Right ventricle myocardium inferior (tissue), 1 donor: ENCODE measurements at regions of chr12 and their contacts with region 1.

Region 1: DNA sequence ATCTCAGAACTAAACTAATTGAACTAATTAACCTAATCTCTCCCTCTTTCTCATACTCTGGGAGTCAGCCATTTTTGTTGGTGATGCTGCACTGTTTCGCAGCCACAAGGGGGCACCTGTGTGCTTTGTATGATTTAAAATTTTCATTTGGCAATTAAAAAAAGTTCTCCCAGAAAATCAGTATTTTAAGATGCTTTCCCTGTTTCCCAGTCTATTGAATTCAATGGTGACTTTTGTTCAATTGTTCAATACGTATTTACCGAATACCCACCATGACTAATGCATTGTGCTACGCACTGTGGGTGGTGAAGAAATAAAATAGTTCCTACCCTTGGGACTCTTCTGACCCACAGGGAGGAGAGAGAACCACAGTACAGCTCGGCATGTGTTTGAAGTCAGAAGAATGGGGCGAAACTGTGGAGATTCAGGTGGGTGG is 63.7 kb downstream of the ZNF664 start:
- DNase-seq: no peak
- ATAC-seq: no peak

Region 2: GRCh38 chr12:123905319-123905925 is 131.3 kb before region 1 on chr12:
- intact Hi-C with region 1: loop called (anchors 5 kb)
- DNase-seq: no peak
- ATAC-seq: no peak

Region 3: GRCh38 chr12:124321040-124321481 is 284.4 kb after region 1 on chr12:
- intact Hi-C with region 1: loop called (anchors 2 kb)
- DNase-seq: no peak
- ATAC-seq: peak; percentile 73

Region 4: DNA sequence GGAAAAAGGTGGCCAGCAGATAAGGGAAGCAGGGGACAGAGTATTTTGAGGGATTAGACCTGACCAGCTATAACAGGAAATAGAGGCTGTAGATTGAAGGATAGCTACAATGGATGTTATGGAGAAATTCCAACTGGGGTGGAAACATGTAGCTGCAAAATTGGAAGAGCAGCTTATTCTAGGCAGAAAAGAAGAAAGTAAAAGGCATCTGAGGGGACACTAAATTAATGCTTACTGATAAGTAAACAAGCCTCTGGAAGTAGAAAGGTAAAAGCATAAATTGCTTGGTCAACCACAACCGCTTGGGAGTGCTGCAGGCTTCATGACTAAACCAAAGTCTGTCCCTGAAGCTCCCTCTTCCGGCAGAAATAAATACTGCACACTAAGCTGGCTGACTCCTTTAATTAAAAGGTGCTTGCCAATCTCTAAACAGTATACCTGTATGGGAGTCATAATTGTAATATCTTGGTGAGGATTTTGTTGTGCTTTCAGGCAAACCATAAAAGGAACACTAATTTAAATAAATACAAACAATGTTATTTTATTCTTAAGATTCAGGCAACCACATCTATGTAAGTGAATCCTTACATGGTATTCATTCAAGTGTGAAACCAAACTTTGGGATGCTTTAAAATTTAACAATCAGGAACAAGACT is 870.0 kb after region 1 on chr12:
- intact Hi-C with region 1: loop called (anchors 10 kb)
- DNase-seq: no peak
- ATAC-seq: peak; percentile 60